HEK293 (cell line): ENCODE measurements at regions of chr15 and their contacts with region 1.

Region 1: DNA sequence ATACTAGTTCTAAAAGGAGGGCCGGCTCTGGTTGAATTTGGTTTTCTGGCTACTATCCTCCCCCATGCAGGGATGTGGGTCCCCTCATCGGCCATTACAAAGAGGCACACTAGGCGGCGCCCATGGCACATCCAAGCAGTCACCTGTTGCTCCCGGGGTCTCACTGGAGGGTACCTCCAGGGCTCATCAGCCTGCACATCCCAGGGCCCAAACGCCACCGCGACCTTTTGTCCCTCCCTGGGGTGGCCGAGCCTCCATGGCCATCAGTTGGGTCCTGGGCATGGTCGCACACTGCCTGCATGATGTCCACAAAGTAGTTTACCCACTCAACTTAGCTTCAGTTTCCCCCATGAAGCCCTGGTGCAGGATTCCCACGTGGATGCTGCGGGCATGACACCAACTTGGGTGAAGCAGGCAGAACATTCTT is 28.3 kb downstream of the IDH3A start:
- H3K4me3 ChIP-seq: no peak overlapping the region
- H3K27ac ChIP-seq: no peak overlapping the region
- H3K4me1 ChIP-seq: no peaks in the 10 kb centered on the region
- CTCF ChIP-seq: peak; percentile 71

Region 2: GRCh38 chr15:77959432-77959879 is 218.0 kb before region 1 on chr15:
- CTCF ChIA-PET with region 1: interaction called, 13 read pairs
- POLR2A ChIA-PET with region 1: no interaction called
- H3K4me3 ChIP-seq: no peak overlapping the region
- H3K27ac ChIP-seq: no peak overlapping the region
- H3K4me1 ChIP-seq: no peaks in the 10 kb centered on the region
- CTCF ChIP-seq: peak; percentile 81

Region 3: DNA sequence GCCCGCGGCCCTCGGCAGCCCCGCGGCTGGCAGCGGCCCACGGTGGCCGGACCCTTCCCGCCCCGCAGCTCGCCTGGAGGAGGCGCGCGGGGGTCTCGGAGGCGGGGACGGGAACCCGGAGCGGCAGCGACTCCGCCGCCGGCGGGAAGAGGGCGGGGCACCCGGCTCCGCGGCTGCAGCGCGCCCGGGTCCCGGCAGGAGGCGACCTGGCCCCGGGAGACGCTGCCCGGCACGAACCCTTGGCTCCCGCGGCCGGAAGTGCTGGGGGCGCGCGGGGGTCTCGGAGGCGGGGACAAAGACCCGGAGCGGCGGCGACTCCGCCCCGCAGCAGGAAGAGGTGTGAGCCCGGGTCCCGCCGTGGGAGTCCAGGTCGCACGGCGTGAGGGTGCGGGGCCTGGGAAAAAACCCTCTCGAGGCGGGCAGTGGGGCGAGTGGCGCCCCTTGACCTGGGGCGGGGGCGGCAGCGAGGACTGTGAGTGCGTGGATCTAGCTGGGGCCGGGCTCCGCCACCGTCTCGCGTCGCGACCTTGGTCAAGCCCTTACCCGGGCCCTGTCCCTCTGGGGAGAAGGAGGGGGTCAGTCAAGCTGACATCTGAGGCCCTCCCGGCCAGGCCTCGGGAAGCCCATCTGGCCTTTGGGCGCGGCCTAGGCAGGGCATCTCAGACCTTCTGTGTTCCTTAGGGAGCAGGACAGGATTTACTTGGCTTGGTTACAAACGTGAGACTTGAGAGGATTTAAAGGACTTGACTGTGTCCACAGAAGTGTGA is 46.0 kb before region 1 on chr15 and contains the start of gene CIB2:
- CTCF ChIA-PET with region 1: interaction called, 28 read pairs
- POLR2A ChIA-PET with region 1: no interaction called
- H3K4me3 ChIP-seq: peak within 1 kb of the TSS; percentile 74
- H3K27ac ChIP-seq: peak within 1 kb of the TSS; percentile 85
- H3K4me1 ChIP-seq: peaks cover 2% of the 10 kb centered on the region; the same call in 1 of the 2 replicates
- CTCF ChIP-seq: peak; percentile 30; the same call in 1 of the 2 replicates

Region 4: GRCh38 chr15:78195735-78196201 is 18.3 kb after region 1 on chr15:
- CTCF ChIA-PET with region 1: interaction called, 83 read pairs
- POLR2A ChIA-PET with region 1: no interaction called
- H3K4me3 ChIP-seq: no peak overlapping the region
- H3K27ac ChIP-seq: no peak overlapping the region
- H3K4me1 ChIP-seq: no peaks in the 10 kb centered on the region
- CTCF ChIP-seq: peak; percentile 83

Region 5: GRCh38 chr15:78232951-78233350 is 55.5 kb after region 1 on chr15:
- CTCF ChIA-PET with region 1: interaction called, 234 read pairs
- POLR2A ChIA-PET with region 1: no interaction called
- H3K4me3 ChIP-seq: no peak overlapping the region
- H3K27ac ChIP-seq: no peak overlapping the region
- H3K4me1 ChIP-seq: no peaks in the 10 kb centered on the region
- CTCF ChIP-seq: no peak